AG04449 (cell line): ENCODE measurements at regions of chr17 and their contacts with region 1.

Region 1: GRCh38 chr17:1783834-1784611 is 22.2 kb downstream of the SERPINF1 start:
- DNase-seq: no peak
- H3K4me3 ChIP-seq: no peak overlapping the region
- CTCF ChIP-seq: peak; percentile 67

Region 2: GRCh38 chr17:1597861-1598342 is 186.1 kb before region 1 on chr17:
- CTCF ChIA-PET with region 1: no interaction called
- POLR2A ChIA-PET with region 1: no interaction called
- DNase-seq: no peak
- H3K4me3 ChIP-seq: no peak overlapping the region
- CTCF ChIP-seq: no peak

Region 3: GRCh38 chr17:1658100-1658499 is 125.9 kb before region 1 on chr17:
- CTCF ChIA-PET with region 1: interaction called, 10 read pairs
- POLR2A ChIA-PET with region 1: no interaction called
- DNase-seq: no peak
- H3K4me3 ChIP-seq: no peak overlapping the region
- CTCF ChIP-seq: no peak

Region 4: DNA sequence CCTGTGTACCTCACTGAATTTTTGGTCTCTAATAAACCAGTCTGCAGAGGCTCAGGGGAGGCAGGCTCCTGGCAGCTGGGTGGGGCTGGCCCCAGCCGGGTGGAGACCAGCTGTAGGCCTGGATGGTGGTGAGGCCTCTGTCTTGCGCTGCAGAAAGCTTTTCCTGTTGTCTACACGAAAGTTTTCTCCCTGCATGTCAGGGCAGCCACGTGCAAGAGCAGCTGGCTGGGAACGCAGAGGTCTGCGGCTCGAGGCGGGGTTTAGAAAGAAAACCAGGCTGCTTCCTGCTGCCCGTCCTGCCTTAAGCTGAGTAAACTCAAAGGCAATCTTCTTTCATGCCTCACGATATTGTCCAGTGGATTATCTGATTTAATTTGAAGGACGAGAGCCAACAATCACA is 19.7 kb before region 1 on chr17:
- CTCF ChIA-PET with region 1: interaction called, 12 read pairs
- POLR2A ChIA-PET with region 1: interaction called, 3 read pairs
- DNase-seq: peak; percentile 44
- H3K4me3 ChIP-seq: peak overlapping the region; percentile 29
- CTCF ChIP-seq: no peak

Region 5: GRCh38 chr17:1773696-1774181 is 10.3 kb before region 1 on chr17:
- CTCF ChIA-PET with region 1: interaction called, 13 read pairs
- POLR2A ChIA-PET with region 1: no interaction called
- DNase-seq: no peak
- H3K4me3 ChIP-seq: no peak overlapping the region
- CTCF ChIP-seq: no peak

Region 6: GRCh38 chr17:1999557-2000251 is 215.7 kb after region 1 on chr17:
- CTCF ChIA-PET with region 1: no interaction called
- POLR2A ChIA-PET with region 1: no interaction called
- DNase-seq: no peak
- H3K4me3 ChIP-seq: no peak overlapping the region
- CTCF ChIP-seq: no peak

Region 7: GRCh38 chr17:2070241-2071023 is 286.4 kb after region 1 on chr17:
- CTCF ChIA-PET with region 1: no interaction called
- POLR2A ChIA-PET with region 1: no interaction called
- DNase-seq: no peak
- H3K4me3 ChIP-seq: no peak overlapping the region
- CTCF ChIP-seq: no peak